ENCODE measurements at regions of chr11 and their contacts with region 1.

Region 1: DNA sequence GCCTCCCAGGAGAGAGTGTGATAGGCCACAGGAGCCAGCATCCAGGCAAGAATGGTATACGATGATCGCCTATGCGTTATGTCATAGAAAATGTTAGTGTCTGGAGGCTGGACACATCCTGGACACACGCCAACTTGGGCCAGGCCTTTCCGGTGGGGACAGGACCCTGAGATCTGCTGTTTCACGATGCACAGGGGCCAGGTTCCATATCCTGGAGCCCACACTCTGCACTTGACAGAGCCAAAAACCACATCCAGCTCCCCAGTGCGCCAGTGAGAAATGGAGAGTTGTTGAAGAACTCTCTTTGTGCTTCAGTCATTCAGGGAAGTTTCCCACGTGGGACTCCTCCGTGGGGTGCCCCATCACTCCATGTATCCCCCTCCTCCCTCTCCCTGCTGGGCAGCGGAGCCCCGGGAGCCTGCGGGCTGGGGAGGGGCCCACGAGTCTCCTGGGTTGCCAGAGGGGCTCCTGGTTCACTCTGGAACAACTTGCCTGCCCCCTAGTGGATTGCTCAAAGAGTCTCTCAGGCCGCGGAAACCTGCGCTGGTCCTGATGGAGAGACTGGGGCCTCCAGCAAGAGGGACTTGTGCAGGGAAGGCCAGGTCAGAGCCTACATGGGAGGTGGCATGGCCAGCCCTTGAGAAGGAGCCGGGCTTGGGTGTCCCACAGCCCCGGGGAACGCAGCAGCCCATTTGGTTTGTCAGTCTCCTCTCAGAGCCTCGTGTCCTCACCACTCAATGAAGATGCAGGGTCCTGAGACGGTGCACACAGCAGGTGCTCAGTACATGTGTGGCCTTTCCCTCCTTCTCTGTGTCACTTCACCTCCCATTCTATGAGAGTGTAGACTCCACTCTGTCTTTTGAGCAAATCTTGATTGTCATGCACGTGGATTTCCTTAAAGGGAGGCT is 10.2 kb upstream of the LRRC32 start:
- DNase-seq: peak; percentile 87
- H3K4me3 ChIP-seq: no peak overlapping the region
- H3K27ac ChIP-seq: no peak overlapping the region
- H3K4me1 ChIP-seq: peaks cover 52% of the 10 kb centered on the region
- CTCF ChIP-seq: peak; percentile 97

Region 2: GRCh38 chr11:76339221-76339620 is 341.6 kb before region 1 on chr11:
- CTCF ChIA-PET with region 1: no interaction called
- POLR2A ChIA-PET with region 1: no interaction called
- intact Hi-C with region 1: loop called (anchors 10 kb)
- DNase-seq: peak; percentile 14
- H3K4me3 ChIP-seq: no peak overlapping the region
- H3K27ac ChIP-seq: no peak overlapping the region
- H3K4me1 ChIP-seq: no peaks in the 10 kb centered on the region
- CTCF ChIP-seq: no peak

Region 3: DNA sequence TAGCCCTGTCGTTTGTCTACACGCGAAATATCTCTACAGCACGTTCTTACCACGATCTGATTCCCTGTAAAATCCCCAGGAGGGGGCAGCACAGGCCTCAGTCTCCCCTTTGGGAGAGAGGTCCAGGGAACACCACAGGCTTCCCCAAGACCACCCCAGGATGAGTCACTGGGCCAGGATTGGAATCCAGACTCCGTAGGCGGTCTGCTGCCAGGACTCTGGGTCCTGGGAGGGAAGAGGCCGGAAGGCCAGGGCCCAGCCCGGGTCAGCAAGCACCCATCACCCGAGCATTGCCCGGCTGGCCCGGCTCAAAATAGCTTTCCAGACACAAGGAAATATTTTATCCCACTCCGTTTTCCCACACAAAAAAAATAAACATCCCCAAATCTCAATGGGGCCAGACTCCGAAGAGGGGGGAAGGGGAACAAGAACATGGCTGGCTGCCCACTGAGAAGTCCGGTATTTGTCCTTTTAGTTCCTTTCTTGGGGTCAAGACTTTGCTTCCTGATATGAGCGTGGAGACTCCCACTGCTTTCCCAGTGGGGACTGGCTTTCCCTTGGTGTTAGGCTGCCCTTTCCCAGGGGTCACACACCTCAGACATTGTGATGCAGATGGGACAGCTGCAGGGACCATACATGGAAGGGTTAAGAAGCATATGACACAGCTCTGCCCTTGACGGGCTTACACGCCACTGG is 101.6 kb before region 1 on chr11:
- CTCF ChIA-PET with region 1: interaction called, 3 read pairs
- POLR2A ChIA-PET with region 1: interaction called, 4 read pairs
- intact Hi-C with region 1: loop called (anchors 1 kb)
- DNase-seq: peak; percentile 41
- H3K4me3 ChIP-seq: no peak overlapping the region
- H3K27ac ChIP-seq: no peak overlapping the region
- H3K4me1 ChIP-seq: no peaks in the 10 kb centered on the region
- CTCF ChIP-seq: peak; percentile 75

Region 4: DNA sequence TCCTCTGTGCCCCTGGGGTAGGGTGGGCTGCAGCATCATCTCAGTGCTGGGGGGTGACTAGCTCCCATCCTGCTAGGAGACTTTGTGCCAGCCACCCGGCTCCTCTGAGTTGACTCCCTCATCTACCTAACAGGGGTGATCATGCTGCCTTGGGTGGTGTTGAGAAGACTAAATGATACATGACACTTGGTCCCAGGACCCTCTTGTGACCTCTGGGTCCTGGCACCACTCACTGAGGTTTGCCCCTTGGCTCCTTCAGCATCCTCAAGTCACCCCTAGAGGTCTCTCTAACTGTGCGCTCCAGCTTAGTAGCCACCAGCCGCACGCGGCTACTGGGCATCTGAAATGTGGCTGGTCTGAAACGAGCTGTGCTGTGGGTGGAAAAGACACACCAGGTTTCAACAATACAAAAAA is 82.3 kb before region 1 on chr11:
- CTCF ChIA-PET with region 1: interaction called, 22 read pairs
- POLR2A ChIA-PET with region 1: interaction called, 5 read pairs
- intact Hi-C with region 1: loop called (anchors 1 kb)
- DNase-seq: peak; percentile 87
- H3K4me3 ChIP-seq: no peak overlapping the region
- H3K27ac ChIP-seq: no peak overlapping the region
- H3K4me1 ChIP-seq: peaks cover 15% of the 10 kb centered on the region
- CTCF ChIP-seq: peak; percentile 95

Region 5: GRCh38 chr11:76700177-76701100 is 19.7 kb after region 1 on chr11:
- CTCF ChIA-PET with region 1: no interaction called
- POLR2A ChIA-PET with region 1: no interaction called
- intact Hi-C with region 1: no loop called
- DNase-seq: no peak
- H3K4me3 ChIP-seq: no peak overlapping the region
- H3K27ac ChIP-seq: no peak overlapping the region
- H3K4me1 ChIP-seq: peaks cover 11% of the 10 kb centered on the region
- CTCF ChIP-seq: no peak

Region 6: DNA sequence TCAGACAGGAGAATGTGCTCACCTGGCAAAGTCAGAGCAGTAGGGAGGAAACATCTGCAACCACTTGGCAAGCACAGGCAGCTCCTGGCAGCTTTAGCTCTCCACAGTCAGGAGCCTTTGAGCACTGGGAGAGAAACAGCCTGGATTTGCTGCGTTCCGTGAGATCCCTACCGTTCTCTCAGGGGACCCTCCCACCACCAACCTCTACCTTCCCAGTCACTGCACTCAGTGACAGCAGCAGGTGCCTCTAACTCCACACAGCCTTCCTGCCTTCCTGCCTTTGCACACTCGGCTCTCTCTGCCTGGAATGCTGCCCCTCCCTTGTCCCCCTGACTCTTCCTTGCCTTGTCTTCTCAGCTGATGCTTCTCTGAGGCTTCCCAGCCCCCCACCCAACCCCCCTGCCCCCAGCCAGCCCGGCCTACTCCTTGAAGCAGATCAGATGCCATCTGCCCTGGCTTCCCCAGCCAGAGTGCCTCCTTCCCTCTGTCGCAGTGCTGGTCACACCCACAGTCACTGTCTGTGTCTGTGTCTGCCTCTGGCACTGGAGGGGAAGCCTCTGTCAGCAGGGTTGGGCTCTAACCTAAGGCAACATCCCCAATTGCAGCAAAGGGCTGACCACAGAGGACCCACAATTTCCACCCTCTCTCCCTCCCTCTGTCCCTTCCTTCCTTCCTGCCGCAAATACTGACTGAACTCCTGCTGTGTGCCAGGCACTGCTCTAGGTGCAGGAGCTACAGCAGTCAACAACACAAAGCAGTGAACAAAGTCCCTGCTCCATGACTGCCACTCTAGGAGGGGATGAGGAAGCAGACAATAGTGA is 87.5 kb after region 1 on chr11:
- CTCF ChIA-PET with region 1: no interaction called
- POLR2A ChIA-PET with region 1: no interaction called
- intact Hi-C with region 1: no loop called
- DNase-seq: no peak
- H3K4me3 ChIP-seq: no peak overlapping the region
- H3K27ac ChIP-seq: no peak overlapping the region
- H3K4me1 ChIP-seq: peaks cover 3% of the 10 kb centered on the region
- CTCF ChIP-seq: no peak

Measured in OCI-LY7 (cell line).